Activated B cell treated with CpG ODN at 0.5 μM for 24 hours (primary cell): ENCODE measurements at regions of chr12 and their contacts with region 1.

Region 1: DNA sequence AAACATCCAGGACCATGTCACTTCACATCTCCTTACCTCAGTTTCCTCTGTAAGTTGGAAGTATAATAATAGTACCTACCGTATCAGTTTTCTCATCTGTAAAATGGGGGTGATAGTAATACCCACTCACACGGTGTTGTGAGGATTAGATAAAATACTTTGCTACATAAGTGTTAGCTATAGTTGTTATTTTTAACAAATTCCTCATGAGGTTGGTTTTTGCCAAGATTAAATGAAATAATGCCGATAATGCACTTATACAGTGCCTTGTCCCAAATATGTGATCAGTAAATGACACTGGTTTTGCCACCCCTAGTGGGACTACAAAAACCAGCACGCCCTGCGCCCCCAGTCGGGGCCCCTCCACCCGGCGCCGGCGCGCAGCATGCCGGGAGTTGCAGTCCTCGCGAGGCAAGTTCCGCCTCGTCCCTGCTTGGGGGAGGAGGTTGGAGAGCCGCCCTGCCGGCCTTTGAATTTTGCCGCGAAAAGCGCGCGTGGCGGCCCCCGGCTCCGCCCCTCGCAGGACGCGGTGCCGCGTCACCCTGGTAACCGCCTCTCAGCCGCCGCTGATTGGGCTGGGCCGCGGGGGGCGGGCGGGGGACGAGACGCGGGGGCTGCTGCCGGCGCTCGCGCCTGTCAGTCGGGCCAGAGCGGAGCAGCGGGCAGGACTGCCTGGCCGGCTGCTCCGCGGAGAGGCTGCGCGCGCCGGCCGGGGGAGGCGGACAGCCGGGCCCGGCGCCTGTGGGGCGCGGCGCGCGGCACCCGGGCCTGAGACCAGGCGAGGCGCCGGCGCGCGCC is at the start of gene FAM222A:
- DNase-seq: peak; percentile 96
- ATAC-seq: peak; percentile 85
- H3K4me3 Mint-ChIP-seq: peak within 1 kb of the TSS; percentile 80
- H3K27ac Mint-ChIP-seq: no peak within 1 kb of the TSS
- H3K4me1 Mint-ChIP-seq: peaks cover 12% of the 10 kb centered on the region
- H3K27me3 Mint-ChIP-seq: peaks cover 23% of the 10 kb centered on the region
- CTCF ChIP-seq: no peak
- total RNA-seq, gene FAM222A: 0.73 and 1.6 TPM in 2 replicates

Region 2: GRCh38 chr12:107760809-107761501 is 1952.4 kb before region 1 on chr12 and contains the start of gene PRDM4:
- CTCF ChIA-PET with region 1: no interaction called
- POLR2A ChIA-PET with region 1: no interaction called
- intact Hi-C with region 1: loop called (anchors 5 kb)
- DNase-seq: peak; percentile 93
- ATAC-seq: peak; percentile 91
- H3K4me3 Mint-ChIP-seq: peak within 1 kb of the TSS; percentile 89
- H3K27ac Mint-ChIP-seq: peak within 1 kb of the TSS; percentile 86
- H3K4me1 Mint-ChIP-seq: peaks cover 33% of the 10 kb centered on the region
- H3K27me3 Mint-ChIP-seq: no peaks in the 10 kb centered on the region
- CTCF ChIP-seq: no peak
- total RNA-seq, gene PRDM4: 37.8 and 45.2 TPM in 2 replicates

Region 3: DNA sequence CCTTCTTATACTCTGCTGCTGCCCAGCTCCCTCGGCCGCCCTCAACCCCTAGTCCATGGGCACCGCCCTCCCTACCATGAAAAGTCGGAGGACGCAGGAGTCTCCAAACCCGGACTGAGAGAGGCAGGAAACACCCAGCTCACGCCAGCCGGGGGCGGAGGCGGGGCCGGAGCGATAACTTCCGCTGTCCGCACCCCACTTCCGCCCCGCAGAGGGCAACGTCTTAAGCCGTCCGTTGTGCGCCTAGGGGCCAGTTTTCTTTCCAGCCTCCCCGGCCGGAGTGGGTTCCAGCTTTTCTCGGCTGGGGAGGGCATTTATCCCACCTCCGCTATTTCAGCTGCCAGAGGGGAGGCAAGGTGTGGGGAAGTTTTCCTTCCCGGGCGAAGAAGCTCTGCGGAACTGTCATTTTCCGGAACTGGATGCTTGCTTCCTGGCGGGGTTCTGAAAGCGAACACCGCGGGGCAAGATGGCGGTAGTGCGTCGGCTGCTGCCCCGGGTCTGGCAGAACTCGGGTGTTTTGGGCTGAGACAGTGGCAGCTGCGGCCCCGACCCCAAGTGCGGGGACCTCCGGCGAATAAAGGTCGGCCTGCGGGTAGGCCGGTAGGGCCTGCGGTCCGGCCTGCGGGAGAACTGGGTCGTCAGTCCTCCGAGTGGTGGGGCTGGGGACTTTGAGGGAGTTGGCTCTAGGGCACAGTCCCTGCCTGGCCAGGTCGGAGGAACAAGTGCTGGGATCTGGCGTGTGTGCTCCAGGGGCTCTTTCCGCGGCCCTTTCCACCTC is 236.0 kb before region 1 on chr12 and contains the starts of genes KCTD10 and UBE3B:
- CTCF ChIA-PET with region 1: no interaction called
- POLR2A ChIA-PET with region 1: no interaction called
- intact Hi-C with region 1: loop called (anchors 1 kb)
- DNase-seq: peak; percentile 84
- ATAC-seq: peak; percentile 94
- H3K4me3 Mint-ChIP-seq: peak within 1 kb of the TSS; percentile 99
- H3K27ac Mint-ChIP-seq: peak within 1 kb of the TSS; percentile 98
- H3K4me1 Mint-ChIP-seq: peaks cover 38% of the 10 kb centered on the region
- H3K27me3 Mint-ChIP-seq: no peaks in the 10 kb centered on the region
- CTCF ChIP-seq: no peak
- total RNA-seq, gene KCTD10: 32.7 and 38.7 TPM in 2 replicates
- total RNA-seq, gene UBE3B: 35.4 and 36.9 TPM in 2 replicates

Region 4: GRCh38 chr12:109597795-109598427 is 115.5 kb before region 1 on chr12:
- CTCF ChIA-PET with region 1: interaction called, 4 read pairs
- POLR2A ChIA-PET with region 1: no interaction called
- intact Hi-C with region 1: loop called (anchors 1 kb)
- DNase-seq: peak; percentile 48
- ATAC-seq: peak; percentile 65
- H3K4me3 Mint-ChIP-seq: no peak overlapping the region
- H3K27ac Mint-ChIP-seq: no peak overlapping the region
- H3K4me1 Mint-ChIP-seq: peaks cover 8% of the 10 kb centered on the region
- H3K27me3 Mint-ChIP-seq: no peaks in the 10 kb centered on the region
- CTCF ChIP-seq: peak; percentile 66

Region 5: DNA sequence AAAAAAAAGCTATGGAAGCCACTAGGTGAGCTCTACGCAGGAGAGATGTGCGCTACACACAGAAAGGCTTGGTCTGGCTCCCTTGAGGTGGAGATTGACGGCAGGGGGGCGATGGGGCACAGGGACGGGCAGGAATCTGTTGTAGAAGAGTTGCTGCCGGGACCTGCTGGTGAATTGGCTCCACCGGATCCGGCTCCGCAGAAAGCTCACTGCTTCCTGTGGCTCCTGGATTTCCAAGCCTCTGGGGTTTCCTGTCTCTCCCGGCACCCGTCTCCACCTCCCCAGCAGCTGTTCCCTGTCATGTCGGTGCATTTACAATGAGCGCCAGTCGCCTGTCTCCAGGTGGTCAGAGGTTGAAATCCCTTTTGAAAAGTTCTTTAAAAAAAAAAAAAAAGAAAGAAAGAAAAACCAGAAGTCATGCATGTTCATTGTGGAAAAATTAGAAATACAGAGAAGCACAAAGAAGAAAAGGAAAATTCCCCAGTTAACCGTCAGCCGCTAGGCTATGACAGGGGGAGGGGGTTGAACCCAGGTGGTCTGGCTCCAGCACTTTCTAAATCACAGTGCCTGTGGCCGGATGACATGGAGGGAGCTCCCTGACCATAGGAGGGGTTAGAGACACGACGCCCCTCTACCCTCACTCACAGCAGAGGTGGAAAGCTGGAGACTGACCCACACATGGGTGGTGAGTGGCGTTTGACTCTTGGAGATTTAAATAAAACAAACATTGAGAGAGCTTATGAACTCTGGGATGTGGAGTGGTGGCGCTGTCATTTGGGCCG is 21.0 kb after region 1 on chr12:
- CTCF ChIA-PET with region 1: no interaction called
- POLR2A ChIA-PET with region 1: no interaction called
- intact Hi-C with region 1: no loop called
- DNase-seq: peak; percentile 6
- ATAC-seq: no peak
- H3K4me3 Mint-ChIP-seq: no peak overlapping the region
- H3K27ac Mint-ChIP-seq: no peak overlapping the region
- H3K4me1 Mint-ChIP-seq: no peaks in the 10 kb centered on the region
- H3K27me3 Mint-ChIP-seq: peaks cover 33% of the 10 kb centered on the region
- CTCF ChIP-seq: no peak

Region 6: GRCh38 chr12:109899783-109900751 is 186.7 kb after region 1 on chr12 and contains the start of gene TCHP:
- CTCF ChIA-PET with region 1: no interaction called
- POLR2A ChIA-PET with region 1: no interaction called
- intact Hi-C with region 1: loop called (anchors 5 kb)
- DNase-seq: peak; percentile 67
- ATAC-seq: peak; percentile 93
- H3K4me3 Mint-ChIP-seq: peak within 1 kb of the TSS; percentile 99
- H3K27ac Mint-ChIP-seq: peak within 1 kb of the TSS; percentile 96
- H3K4me1 Mint-ChIP-seq: peaks cover 29% of the 10 kb centered on the region
- H3K27me3 Mint-ChIP-seq: no peaks in the 10 kb centered on the region
- CTCF ChIP-seq: no peak
- total RNA-seq, gene TCHP: 26.0 and 28.3 TPM in 2 replicates